Activated T-helper 1 cell treated with anti-CD3 and anti-CD28 coated beads, Interleukin-12 subunit alpha, Interleukin-12 subunit beta, Interleukin-2, Interleukin-4 antibody, amounts not matched to agents 30 ng/mL and 10 ng/mL and 1 ng/mL, durations not matched to agents 14 hours and 24 hours and 36 hours (primary cell): ENCODE measurements at regions of chr10 and their contacts with region 1.

Region 1: DNA sequence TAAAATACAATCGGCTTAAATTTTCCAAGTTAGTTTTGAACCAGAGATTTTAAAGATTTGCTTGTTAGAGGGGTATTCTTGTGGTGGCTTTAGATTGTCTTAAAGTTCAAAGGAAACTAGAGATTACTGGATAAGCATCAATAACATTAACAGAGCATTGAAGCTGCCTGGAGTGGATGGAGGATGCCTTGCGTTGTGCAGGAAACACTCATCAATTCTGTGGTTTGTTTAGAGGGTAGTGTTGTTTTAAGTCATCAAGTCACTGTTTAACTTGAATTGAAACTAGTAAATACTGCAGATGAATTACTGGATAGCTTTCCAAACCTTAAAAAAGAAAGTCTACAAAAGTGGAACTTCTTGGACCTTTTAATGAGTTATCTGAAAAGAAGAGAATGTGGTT is 218.6 kb downstream of the CELF2 start:
- DNase-seq: no peak
- H3K4me3 Mint-ChIP-seq: peak overlapping the region; percentile 53
- H3K27ac Mint-ChIP-seq: peak overlapping the region; percentile 96
- H3K4me1 Mint-ChIP-seq: peaks cover 81% of the 10 kb centered on the region
- H3K27me3 Mint-ChIP-seq: no peaks in the 10 kb centered on the region

Region 2: GRCh38 chr10:11170993-11171851 is 65.0 kb before region 1 on chr10:
- intact Hi-C with region 1: loop called (anchors 1 kb)
- DNase-seq: no peak
- H3K4me3 Mint-ChIP-seq: no peak overlapping the region
- H3K27ac Mint-ChIP-seq: no peak overlapping the region
- H3K4me1 Mint-ChIP-seq: no peaks in the 10 kb centered on the region
- H3K27me3 Mint-ChIP-seq: no peaks in the 10 kb centered on the region

Region 3: GRCh38 chr10:11209830-11210181 is 26.4 kb before region 1 on chr10:
- intact Hi-C with region 1: loop called (anchors 1 kb)
- DNase-seq: no peak
- H3K4me3 Mint-ChIP-seq: peak overlapping the region; percentile 76
- H3K27ac Mint-ChIP-seq: peak overlapping the region; percentile 96
- H3K4me1 Mint-ChIP-seq: peaks cover 98% of the 10 kb centered on the region
- H3K27me3 Mint-ChIP-seq: peaks cover 1% of the 10 kb centered on the region

Region 4: GRCh38 chr10:11225935-11226334 is 10.3 kb before region 1 on chr10:
- intact Hi-C with region 1: loop called (anchors 1 kb)
- DNase-seq: peak; percentile 48
- H3K4me3 Mint-ChIP-seq: peak overlapping the region; percentile 47
- H3K27ac Mint-ChIP-seq: peak overlapping the region; percentile 91
- H3K4me1 Mint-ChIP-seq: peaks cover 94% of the 10 kb centered on the region
- H3K27me3 Mint-ChIP-seq: no peaks in the 10 kb centered on the region

Region 5: GRCh38 chr10:11270135-11270857 is 34.1 kb after region 1 on chr10:
- intact Hi-C with region 1: loop called (anchors 1 kb)
- DNase-seq: peak; percentile 26
- H3K4me3 Mint-ChIP-seq: no peak overlapping the region
- H3K27ac Mint-ChIP-seq: peak overlapping the region; percentile 68
- H3K4me1 Mint-ChIP-seq: peaks cover 69% of the 10 kb centered on the region
- H3K27me3 Mint-ChIP-seq: no peaks in the 10 kb centered on the region

Region 6: GRCh38 chr10:11286261-11286852 is 50.1 kb after region 1 on chr10:
- intact Hi-C with region 1: no loop called
- DNase-seq: no peak
- H3K4me3 Mint-ChIP-seq: no peak overlapping the region
- H3K27ac Mint-ChIP-seq: no peak overlapping the region
- H3K4me1 Mint-ChIP-seq: peaks cover 4% of the 10 kb centered on the region
- H3K27me3 Mint-ChIP-seq: no peaks in the 10 kb centered on the region

Region 7: GRCh38 chr10:12113627-12114026 is 877.4 kb after region 1 on chr10:
- intact Hi-C with region 1: loop called (anchors 2 kb)
- DNase-seq: no peak
- H3K4me3 Mint-ChIP-seq: no peak overlapping the region
- H3K27ac Mint-ChIP-seq: peak overlapping the region; percentile 90
- H3K4me1 Mint-ChIP-seq: peaks cover 44% of the 10 kb centered on the region
- H3K27me3 Mint-ChIP-seq: no peaks in the 10 kb centered on the region